ENCODE measurements at regions of chr4 and their contacts with region 1.

Region 1: DNA sequence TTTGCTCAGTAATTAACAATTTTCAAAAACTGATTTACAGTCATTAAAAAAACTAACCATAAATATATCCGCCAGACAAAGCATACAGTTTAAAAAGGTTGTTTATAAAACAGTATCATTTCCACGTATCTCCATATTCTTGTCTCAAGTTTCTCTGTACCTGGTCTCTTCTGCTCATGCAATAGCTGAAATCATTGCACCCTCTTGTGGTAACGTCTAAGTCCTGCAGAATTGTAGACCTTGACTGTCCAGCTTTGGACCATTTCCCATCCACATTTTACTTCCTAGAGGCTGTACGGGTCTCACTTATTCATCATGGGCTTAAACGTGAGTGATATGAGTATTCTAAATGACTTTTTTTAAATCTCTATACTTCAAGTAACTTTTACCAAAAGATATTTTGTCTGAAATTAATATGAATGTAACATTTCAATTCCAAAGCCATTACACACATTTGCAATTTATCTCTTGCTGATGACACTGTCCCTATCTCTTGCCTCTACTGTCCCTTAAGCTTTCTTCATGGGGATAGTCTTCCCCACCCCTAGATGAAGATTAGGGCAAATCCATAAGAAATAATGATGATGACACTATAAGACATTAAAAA is 118.5 kb downstream of the BTC start:
- DNase-seq: no peak
- ATAC-seq: peak in 3 of 4 donors; percentile 51 to 71 (median 69)
- H3K4me3 ChIP-seq: no peak overlapping the region
- H3K27ac ChIP-seq: no peak overlapping the region
- H3K4me1 ChIP-seq: no peaks in the 10 kb centered on the region
- H3K27me3 ChIP-seq: no peaks in the 10 kb centered on the region
- CTCF ChIP-seq: peak; percentile 42 to 73 (median 63)
- POLR2A ChIP-seq: no peak

Region 2: GRCh38 chr4:74228691-74229640 is 446.8 kb before region 1 on chr4:
- intact Hi-C with region 1: loop called in 1 of 10 experiments (anchors 10 kb)
- DNase-seq: peak; percentile 41 to 69 (median 62)
- ATAC-seq: peak; percentile 51 to 77 (median 68)
- H3K4me3 ChIP-seq: no peak overlapping the region
- H3K27ac ChIP-seq: no peak overlapping the region
- H3K4me1 ChIP-seq: peaks cover 0 to 14% (median 4%) of the 10 kb centered on the region in 12 donors
- H3K27me3 ChIP-seq: no peaks in the 10 kb centered on the region
- CTCF ChIP-seq: peak; percentile 68 to 90 (median 81)
- POLR2A ChIP-seq: no peak

Region 3: DNA sequence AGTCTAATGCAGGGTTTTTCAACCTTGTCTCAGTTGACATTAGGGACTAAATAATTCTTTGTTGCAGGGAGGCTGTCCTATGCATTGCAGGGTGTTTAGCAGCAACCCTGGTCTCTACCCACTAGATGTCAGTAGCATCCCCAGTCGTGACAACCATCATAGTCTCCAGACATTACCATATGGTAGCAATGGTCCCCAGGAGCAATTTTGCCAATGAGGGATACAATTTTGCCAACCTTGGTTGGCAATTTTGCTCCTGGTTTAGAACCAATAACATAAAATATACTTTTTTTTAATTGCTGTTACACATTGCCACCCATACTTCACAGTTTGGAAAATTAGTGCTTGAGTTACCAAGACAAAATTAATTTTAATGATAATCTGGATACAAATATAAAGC is 304.9 kb before region 1 on chr4:
- intact Hi-C with region 1: loop called (anchors 2 to 5 kb)
- DNase-seq: no peak
- ATAC-seq: peak in 3 of 4 donors; percentile 54 to 74 (median 67)
- H3K4me3 ChIP-seq: no peak overlapping the region
- H3K27ac ChIP-seq: no peak overlapping the region
- H3K4me1 ChIP-seq: peaks cover 0 to 10% (median under 1%) of the 10 kb centered on the region in 12 donors
- H3K27me3 ChIP-seq: peaks cover 0 to 20% (median 7%) of the 10 kb centered on the region in 9 donors
- CTCF ChIP-seq: peak; percentile 27 to 62 (median 48)
- POLR2A ChIP-seq: no peak

Region 4: GRCh38 chr4:74531963-74532794 is 143.6 kb before region 1 on chr4:
- intact Hi-C with region 1: loop called in 2 of 10 experiments (anchors 5 to 10 kb)
- DNase-seq: no peak
- ATAC-seq: peak; percentile 68 to 83 (median 76)
- H3K4me3 ChIP-seq: no peak overlapping the region
- H3K27ac ChIP-seq: no peak overlapping the region
- H3K4me1 ChIP-seq: peaks cover 0 to 10% (median 5%) of the 10 kb centered on the region in 12 donors
- H3K27me3 ChIP-seq: no peaks in the 10 kb centered on the region
- CTCF ChIP-seq: peak in 10 of 12 donors; percentile 39 to 67 (median 60)
- POLR2A ChIP-seq: no peak

Region 5: GRCh38 chr4:75235359-75235951 is 559.7 kb after region 1 on chr4:
- intact Hi-C with region 1: no loop called
- DNase-seq: no peak
- ATAC-seq: no peak
- H3K4me3 ChIP-seq: no peak overlapping the region
- H3K27ac ChIP-seq: no peak overlapping the region
- H3K4me1 ChIP-seq: no peaks in the 10 kb centered on the region
- H3K27me3 ChIP-seq: no peaks in the 10 kb centered on the region
- CTCF ChIP-seq: no peak
- POLR2A ChIP-seq: no peak